Endothelial cell of umbilical vein (primary cell): ENCODE measurements at regions of chr15 and their contacts with region 1.

Region 1: DNA sequence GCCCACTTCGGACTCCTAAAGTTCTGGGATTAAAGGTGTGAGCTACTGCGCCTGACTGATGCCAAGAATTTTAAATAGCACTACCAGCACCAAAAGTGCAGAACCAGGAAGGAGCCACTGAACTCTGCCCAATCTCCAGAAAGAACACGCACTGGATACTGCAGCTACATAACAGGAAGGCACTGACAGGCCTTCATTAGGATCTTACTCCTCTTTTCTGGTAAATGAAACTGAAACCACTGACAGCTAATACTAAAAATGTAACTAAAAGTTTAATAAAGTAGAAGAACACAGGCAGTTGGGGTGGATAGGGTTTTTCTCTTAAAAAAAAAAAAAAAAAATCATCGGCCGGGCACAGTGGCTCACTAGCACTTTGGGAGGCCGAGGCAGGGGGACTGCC is 74.1 kb upstream of the CHRM5 start:
- DNase-seq: no peak
- H3K4me3 ChIP-seq: no peak overlapping the region
- H3K27ac ChIP-seq: no peak overlapping the region
- H3K4me1 ChIP-seq: no peaks in the 10 kb centered on the region
- H3K27me3 ChIP-seq: no peaks in the 10 kb centered on the region
- CTCF ChIP-seq: no peak
- POLR2A ChIP-seq: no peak

Region 2: DNA sequence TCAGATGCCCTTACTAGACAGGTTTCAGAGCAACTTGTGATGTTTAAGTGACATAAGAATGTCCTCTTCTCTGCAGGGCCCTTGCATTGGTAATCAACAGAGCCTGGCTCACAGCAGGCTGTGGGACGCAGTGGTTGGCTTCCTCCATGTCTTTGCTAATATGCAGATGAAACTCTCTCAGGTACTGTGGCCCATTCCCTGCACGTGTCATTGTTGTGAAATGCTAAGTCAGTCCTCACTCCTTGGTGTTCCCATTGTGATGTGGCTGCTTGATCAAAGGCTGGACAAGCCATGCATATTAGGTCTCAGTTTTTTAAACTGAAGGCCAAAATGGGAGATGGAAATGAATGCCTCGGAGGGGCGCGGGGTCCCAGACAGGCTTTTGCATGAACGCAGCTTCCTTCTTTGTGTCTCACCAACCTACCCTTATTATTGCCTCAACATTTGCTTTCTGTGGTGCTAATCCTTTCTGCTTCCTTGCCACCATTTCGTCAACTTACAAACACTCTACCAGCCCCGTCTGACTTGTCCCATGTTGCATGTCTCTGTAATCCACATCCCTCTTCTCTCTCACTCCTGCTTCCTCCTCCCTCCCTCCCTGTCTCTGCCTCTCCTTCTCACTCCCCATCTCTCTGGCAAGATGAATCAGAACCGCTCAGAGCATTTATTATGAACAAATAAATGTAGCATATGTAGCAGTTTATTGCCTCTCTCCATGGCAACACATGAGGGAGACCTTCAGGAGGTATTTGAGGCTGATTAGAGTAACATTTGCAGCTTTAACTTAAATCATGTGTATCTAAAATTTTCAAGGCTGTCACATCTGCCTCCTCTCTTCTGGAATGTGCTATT is 59.1 kb before region 1 on chr15:
- CTCF ChIA-PET with region 1: no interaction called
- POLR2A ChIA-PET with region 1: no interaction called
- dilution Hi-C with region 1: no loop called
- intact Hi-C with region 1: loop called (anchors 10 kb)
- DNase-seq: no peak
- H3K4me3 ChIP-seq: no peak overlapping the region
- H3K27ac ChIP-seq: no peak overlapping the region
- H3K4me1 ChIP-seq: no peaks in the 10 kb centered on the region
- H3K27me3 ChIP-seq: no peaks in the 10 kb centered on the region
- CTCF ChIP-seq: no peak
- POLR2A ChIP-seq: no peak

Region 3: DNA sequence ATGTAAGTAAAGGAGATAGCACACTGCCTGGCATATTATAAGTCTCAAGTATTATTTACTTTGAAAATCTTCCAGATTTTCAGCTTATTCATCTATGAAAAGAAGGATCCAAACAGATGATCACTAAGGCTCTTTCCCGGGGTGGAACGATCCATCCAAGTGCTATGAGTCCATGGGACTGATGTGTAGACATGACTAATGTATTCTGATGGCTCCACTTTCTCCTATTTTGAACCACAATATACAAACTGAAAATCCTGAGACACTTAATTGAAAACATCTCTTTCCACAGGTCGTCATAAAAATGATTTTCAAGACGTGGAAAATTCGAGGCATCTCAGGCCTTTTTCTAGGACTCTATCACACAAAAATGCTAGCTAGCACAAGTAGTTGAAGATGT is 40.7 kb after region 1 on chr15:
- CTCF ChIA-PET with region 1: no interaction called
- POLR2A ChIA-PET with region 1: no interaction called
- dilution Hi-C with region 1: no loop called
- intact Hi-C with region 1: no loop called
- DNase-seq: no peak
- H3K4me3 ChIP-seq: no peak overlapping the region
- H3K27ac ChIP-seq: no peak overlapping the region
- H3K4me1 ChIP-seq: no peaks in the 10 kb centered on the region
- H3K27me3 ChIP-seq: no peaks in the 10 kb centered on the region
- CTCF ChIP-seq: no peak
- POLR2A ChIP-seq: no peak